ENCODE measurements at regions of chr3 and their contacts with region 1.

Region 1: DNA sequence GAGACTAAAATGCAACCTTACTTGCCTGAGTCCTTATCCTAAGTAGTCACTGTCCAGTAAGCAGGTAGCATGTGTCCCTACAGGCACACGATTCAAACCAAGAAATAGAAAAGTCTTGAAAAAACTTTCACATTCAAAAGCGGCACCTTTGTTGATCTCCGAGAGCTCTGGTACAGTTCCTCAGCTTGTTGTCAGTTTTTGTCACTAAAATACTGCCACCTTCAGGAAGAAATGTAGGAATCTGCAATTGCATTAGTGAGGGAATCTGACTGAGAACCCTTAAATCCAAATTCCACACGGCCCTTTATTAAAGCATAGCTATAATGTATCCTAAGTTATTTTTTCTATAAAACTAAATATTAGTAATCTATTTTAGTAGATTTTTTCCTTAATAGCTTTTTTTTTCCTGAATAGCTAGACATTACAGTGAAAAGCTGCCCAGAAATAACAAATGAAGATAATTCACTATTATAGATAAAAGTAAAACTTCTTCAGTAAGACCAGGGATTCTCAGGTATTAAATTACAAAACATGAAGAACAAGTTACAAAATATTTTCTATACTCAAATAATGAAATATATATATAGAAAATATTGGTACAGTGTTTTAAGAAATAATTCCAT is 44.0 kb downstream of the CCDC54 start:
- DNase-seq: peak; percentile 15
- ATAC-seq: peak; percentile 77
- H3K4me3 Mint-ChIP-seq: peak overlapping the region; percentile 28
- H3K27ac Mint-ChIP-seq: no peak overlapping the region
- H3K4me1 Mint-ChIP-seq: peaks cover 2% of the 10 kb centered on the region
- H3K27me3 Mint-ChIP-seq: peaks cover 6% of the 10 kb centered on the region
- CTCF ChIP-seq: peak; percentile 76

Region 2: GRCh38 chr3:107198581-107199181 is 222.6 kb before region 1 on chr3:
- CTCF ChIA-PET with region 1: no interaction called
- POLR2A ChIA-PET with region 1: no interaction called
- intact Hi-C with region 1: no loop called
- DNase-seq: no peak
- ATAC-seq: no peak
- H3K4me3 Mint-ChIP-seq: no peak overlapping the region
- H3K27ac Mint-ChIP-seq: no peak overlapping the region
- H3K4me1 Mint-ChIP-seq: peaks cover 4% of the 10 kb centered on the region
- H3K27me3 Mint-ChIP-seq: peaks cover 19% of the 10 kb centered on the region
- CTCF ChIP-seq: no peak

Region 3: GRCh38 chr3:107235928-107236315 is 185.4 kb before region 1 on chr3:
- CTCF ChIA-PET with region 1: interaction called, 71 read pairs
- POLR2A ChIA-PET with region 1: no interaction called
- intact Hi-C with region 1: loop called (anchors 2 kb)
- DNase-seq: peak; percentile 52
- ATAC-seq: peak; percentile 71
- H3K4me3 Mint-ChIP-seq: peak overlapping the region; percentile 60
- H3K27ac Mint-ChIP-seq: no peak overlapping the region
- H3K4me1 Mint-ChIP-seq: peaks cover 13% of the 10 kb centered on the region
- H3K27me3 Mint-ChIP-seq: peaks cover 2% of the 10 kb centered on the region
- CTCF ChIP-seq: peak; percentile 94

Region 4: DNA sequence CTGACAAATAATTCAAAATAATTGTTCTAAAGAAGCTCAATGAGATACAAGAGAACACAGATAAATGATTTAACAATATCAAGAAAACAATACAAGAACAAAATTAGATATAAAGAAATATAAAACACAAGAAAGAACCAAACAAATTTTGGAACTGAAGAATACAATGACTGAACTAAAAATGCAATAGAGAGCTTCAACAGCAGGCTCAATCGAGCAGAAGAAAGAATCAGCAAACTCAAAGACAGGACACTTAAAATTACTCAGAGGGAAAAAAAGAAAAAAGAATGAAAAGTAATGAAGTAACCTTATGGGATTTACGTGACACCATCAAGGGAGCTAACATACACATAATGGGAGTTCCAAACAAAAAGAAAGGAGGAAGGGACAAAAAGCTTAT is 11.9 kb before region 1 on chr3:
- CTCF ChIA-PET with region 1: interaction called, 11 read pairs
- POLR2A ChIA-PET with region 1: no interaction called
- intact Hi-C with region 1: no loop called
- DNase-seq: no peak
- ATAC-seq: no peak
- H3K4me3 Mint-ChIP-seq: no peak overlapping the region
- H3K27ac Mint-ChIP-seq: no peak overlapping the region
- H3K4me1 Mint-ChIP-seq: peaks cover 5% of the 10 kb centered on the region
- H3K27me3 Mint-ChIP-seq: no peaks in the 10 kb centered on the region
- CTCF ChIP-seq: no peak

Region 5: DNA sequence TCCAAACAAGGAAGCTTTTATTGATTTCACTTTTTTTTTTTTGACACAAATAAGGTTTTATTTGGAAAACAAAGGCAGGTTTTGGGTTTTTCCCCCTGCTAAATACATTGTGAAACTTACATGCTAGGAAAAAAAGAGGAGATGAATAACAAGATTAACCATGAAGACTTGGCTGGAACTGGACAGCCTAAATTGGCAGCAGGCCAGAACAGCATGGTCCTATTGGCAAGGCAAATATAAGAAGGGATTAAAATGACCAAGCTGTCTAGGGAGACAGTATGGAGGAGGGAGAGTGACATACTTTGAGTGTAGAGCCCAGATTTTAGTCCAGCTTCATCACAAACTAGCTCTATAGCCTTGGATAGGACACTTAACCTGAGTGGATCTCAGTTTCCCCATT is 37.6 kb after region 1 on chr3:
- CTCF ChIA-PET with region 1: no interaction called
- POLR2A ChIA-PET with region 1: no interaction called
- intact Hi-C with region 1: no loop called
- DNase-seq: no peak
- ATAC-seq: no peak
- H3K4me3 Mint-ChIP-seq: no peak overlapping the region
- H3K27ac Mint-ChIP-seq: no peak overlapping the region
- H3K4me1 Mint-ChIP-seq: peaks cover 5% of the 10 kb centered on the region
- H3K27me3 Mint-ChIP-seq: no peaks in the 10 kb centered on the region
- CTCF ChIP-seq: no peak

Region 6: DNA sequence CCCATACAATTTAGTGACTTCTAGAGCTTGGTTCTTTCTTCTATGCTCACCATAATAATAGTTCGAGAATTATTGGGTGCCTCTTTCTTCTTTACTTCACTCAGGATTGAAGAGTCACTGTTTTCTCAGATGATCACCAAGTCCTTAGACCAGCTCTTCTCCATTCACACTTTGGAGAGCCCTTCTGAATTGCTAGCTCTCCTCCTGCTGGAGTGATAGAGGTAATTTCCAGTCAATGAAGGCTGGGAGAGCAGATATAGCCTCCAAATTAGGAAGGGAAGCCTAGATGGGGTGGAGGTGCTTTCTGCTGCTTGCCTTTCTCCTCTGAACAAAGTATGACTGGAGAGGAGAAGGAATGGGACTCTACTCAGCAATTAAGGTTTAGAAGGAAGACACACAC is 90.8 kb after region 1 on chr3:
- CTCF ChIA-PET with region 1: interaction called, 10 read pairs
- POLR2A ChIA-PET with region 1: no interaction called
- intact Hi-C with region 1: no loop called
- DNase-seq: no peak
- ATAC-seq: no peak
- H3K4me3 Mint-ChIP-seq: no peak overlapping the region
- H3K27ac Mint-ChIP-seq: no peak overlapping the region
- H3K4me1 Mint-ChIP-seq: no peaks in the 10 kb centered on the region
- H3K27me3 Mint-ChIP-seq: peaks cover 6% of the 10 kb centered on the region
- CTCF ChIP-seq: no peak

Measured in activated CD8-positive, alpha-beta T cell treated with anti-CD3 and anti-CD28 coated beads for 36 hours (primary cell).